Mammary epithelial cell (primary cell): ENCODE measurements at regions of chr7 and their contacts with region 1.

Region 1: GRCh38 chr7:24907311-24907886 is 72.6 kb downstream of the OSBPL3 start:
- DNase-seq: peak; percentile 87
- H3K4me3 ChIP-seq: peak overlapping the region in 2 of 3 experiments; percentile 18 to 36
- H3K27ac ChIP-seq: peak overlapping the region; percentile 77
- H3K4me1 ChIP-seq: peaks cover 62% of the 10 kb centered on the region
- H3K27me3 ChIP-seq: no peaks in the 10 kb centered on the region
- CTCF ChIP-seq: no peak

Region 2: DNA sequence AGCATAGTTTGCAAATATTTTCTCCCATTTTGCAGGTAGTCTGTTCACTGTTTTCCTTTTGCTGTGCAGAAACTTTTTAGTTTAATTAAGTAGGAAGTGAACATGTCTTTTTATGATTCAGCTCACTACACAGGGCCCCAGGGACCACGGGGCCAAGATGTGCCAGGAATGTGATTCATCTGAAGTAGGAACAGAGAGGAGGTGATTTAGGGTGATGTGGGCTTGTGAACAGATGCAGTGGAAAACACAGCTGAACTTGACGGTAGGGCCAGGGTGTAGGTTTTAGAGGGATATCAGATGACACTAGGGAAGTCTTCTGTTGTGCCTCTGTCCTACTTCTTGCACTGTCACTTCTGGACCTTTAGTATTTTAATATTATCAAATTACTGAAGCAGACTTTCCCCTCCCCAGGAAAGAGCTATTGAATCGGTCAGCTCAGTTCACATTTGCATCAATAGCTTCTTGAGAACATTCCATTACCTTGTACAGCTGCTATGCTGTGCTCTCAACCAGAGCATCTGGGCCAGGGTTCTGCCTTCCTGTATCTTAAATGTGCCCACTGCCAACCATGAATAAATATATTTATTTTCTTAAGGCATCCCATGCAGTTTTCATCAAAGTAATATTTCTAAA is 24.3 kb before region 1 on chr7:
- CTCF ChIA-PET with region 1: interaction called, 24 read pairs
- dilution Hi-C with region 1: no loop called
- in situ Hi-C with region 1: no loop called
- intact Hi-C with region 1: no loop called
- DNase-seq: peak; percentile 71
- H3K4me3 ChIP-seq: no peak overlapping the region
- H3K27ac ChIP-seq: peak overlapping the region; percentile 31
- H3K4me1 ChIP-seq: peaks cover 14% of the 10 kb centered on the region
- H3K27me3 ChIP-seq: no peaks in the 10 kb centered on the region
- CTCF ChIP-seq: no peak

Region 3: DNA sequence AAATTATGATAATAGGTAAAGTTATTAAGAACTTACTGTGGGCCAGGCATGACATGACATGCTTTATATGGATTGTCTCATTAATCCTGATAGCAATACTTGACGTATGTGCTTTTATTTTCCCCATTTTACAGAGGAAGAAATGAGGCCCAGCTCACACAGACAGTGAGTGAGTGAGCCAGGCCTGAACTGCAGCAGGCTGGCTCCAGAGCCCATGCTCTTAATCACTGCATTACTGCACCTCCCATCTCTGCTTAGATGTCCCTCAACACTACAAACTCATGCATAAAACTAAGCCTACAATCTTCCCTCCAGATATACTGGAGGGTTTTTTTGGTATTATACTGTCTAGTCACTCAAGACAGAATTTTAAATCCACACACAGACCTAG is 141.0 kb after region 1 on chr7:
- CTCF ChIA-PET with region 1: no interaction called
- dilution Hi-C with region 1: no loop called
- in situ Hi-C with region 1: no loop called
- intact Hi-C with region 1: no loop called
- DNase-seq: no peak
- H3K4me3 ChIP-seq: no peak overlapping the region
- H3K27ac ChIP-seq: no peak overlapping the region
- H3K4me1 ChIP-seq: no peaks in the 10 kb centered on the region
- H3K27me3 ChIP-seq: no peaks in the 10 kb centered on the region
- CTCF ChIP-seq: no peak

Region 4: GRCh38 chr7:25206765-25207164 is 299.4 kb after region 1 on chr7:
- CTCF ChIA-PET with region 1: no interaction called
- dilution Hi-C with region 1: no loop called
- in situ Hi-C with region 1: no loop called
- intact Hi-C with region 1: no loop called
- DNase-seq: no peak
- H3K4me3 ChIP-seq: no peak overlapping the region
- H3K27ac ChIP-seq: no peak overlapping the region
- H3K4me1 ChIP-seq: no peaks in the 10 kb centered on the region
- H3K27me3 ChIP-seq: no peaks in the 10 kb centered on the region
- CTCF ChIP-seq: no peak